MCF 10A (cell line): ENCODE measurements at regions of chrX and their contacts with region 1.

Region 1: GRCh38 chrX:101462892-101463291 is 22.4 kb upstream of the ARMCX4 start:
- DNase-seq: peak; percentile 51
- H3K4me3 Mint-ChIP-seq: no peak overlapping the region
- H3K27ac Mint-ChIP-seq: no peak overlapping the region
- H3K4me1 Mint-ChIP-seq: no peaks in the 10 kb centered on the region
- H3K27me3 Mint-ChIP-seq: peaks cover 63% of the 10 kb centered on the region
- CTCF ChIP-seq: peak; percentile 35

Region 2: DNA sequence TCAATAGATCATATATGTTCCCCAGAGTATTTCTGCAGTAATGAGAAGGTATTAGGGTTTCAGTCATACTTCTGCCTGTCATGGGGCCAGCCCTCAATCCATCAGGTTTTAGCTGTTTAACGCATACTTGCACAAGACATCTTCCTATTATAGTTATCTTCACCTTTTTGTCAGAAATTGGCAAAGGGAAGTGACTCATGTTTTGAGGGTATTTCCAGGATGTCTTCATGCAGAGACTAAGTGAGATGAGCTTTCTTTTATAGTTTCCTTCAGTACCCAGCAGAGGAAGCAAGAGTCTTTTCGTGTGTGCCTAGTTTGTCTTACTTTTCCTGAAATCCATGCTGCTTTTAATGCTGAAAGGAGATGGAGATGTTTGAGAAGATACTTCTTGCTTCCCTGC is 633.2 kb before region 1 on chrX:
- CTCF ChIA-PET with region 1: no interaction called
- POLR2A ChIA-PET with region 1: no interaction called
- intact Hi-C with region 1: no loop called
- DNase-seq: peak; percentile 42
- H3K4me3 Mint-ChIP-seq: no peak overlapping the region
- H3K27ac Mint-ChIP-seq: no peak overlapping the region
- H3K4me1 Mint-ChIP-seq: peaks cover 7% of the 10 kb centered on the region
- H3K27me3 Mint-ChIP-seq: peaks cover 84% of the 10 kb centered on the region
- CTCF ChIP-seq: no peak

Region 3: GRCh38 chrX:101799387-101799786 is 336.5 kb after region 1 on chrX:
- CTCF ChIA-PET with region 1: interaction called, 5 read pairs
- POLR2A ChIA-PET with region 1: no interaction called
- intact Hi-C with region 1: loop called (anchors 5 kb)
- DNase-seq: peak; percentile 91
- H3K4me3 Mint-ChIP-seq: no peak overlapping the region
- H3K27ac Mint-ChIP-seq: no peak overlapping the region
- H3K4me1 Mint-ChIP-seq: no peaks in the 10 kb centered on the region
- H3K27me3 Mint-ChIP-seq: peaks cover 27% of the 10 kb centered on the region
- CTCF ChIP-seq: peak; percentile 66